PC-9 (cell line): ENCODE measurements at regions of chr19 and their contacts with region 1.

Region 1: GRCh38 chr19:32405431-32406161 is at the start of gene DPY19L3:
- DNase-seq: peak; percentile 79 to 94
- H3K4me3 ChIP-seq: peak within 1 kb of the TSS; percentile 93
- H3K27ac ChIP-seq: peak within 1 kb of the TSS; percentile 66
- H3K4me1 ChIP-seq: peaks cover 17% of the 10 kb centered on the region; the same call in 1 of the 2 replicates
- H3K27me3 ChIP-seq: no peaks in the 10 kb centered on the region
- CTCF ChIP-seq: no peak
- total RNA-seq, gene DPY19L3: 22.3 and 29.0 TPM in 2 replicates

Region 2: DNA sequence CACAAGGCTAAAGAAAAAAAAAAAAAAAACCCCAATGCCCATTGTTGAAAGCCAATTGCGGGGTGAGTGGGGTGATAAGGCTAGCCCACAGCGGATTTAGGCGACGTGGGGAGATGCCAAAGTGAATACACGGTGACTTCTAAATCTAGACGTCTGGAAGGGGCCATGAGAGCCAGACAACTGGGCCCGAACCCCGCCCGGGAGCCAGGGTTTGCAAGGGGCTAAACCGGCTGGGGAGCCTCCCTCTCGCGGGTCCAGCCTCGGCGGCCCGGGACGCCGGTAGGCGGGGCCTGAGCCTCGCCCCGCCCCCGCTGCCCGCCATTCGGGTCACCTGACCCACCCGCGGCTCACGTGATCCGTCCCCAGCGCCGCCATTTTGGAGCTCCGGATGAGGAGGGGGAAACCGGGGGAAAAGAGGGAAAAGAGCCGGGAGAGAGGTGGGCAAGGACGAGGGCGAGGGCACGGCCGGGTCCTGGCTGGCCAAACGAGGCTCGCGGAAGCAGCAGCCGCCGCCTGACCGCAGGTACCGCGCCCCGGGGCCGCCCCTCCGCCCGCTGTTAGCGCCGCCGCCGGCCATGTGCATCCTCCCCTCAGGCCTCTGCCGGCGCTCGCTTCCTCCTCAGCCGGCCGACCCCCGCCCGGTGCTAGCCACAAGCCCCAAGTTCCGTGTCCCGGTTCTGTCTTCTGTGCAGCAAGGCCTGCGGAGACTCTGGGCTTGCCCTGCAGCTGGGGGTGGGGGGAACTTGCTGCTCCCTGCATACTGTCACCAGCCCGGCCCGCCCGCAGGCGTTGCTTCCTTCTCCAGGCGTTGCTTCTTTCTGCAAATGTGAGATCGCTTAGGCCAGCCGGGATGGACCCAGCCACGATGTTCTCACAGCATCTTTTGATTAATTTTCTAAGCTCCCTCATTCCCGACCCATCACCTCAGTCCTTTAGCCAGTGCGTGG is 60.1 kb before region 1 on chr19 and contains the start of gene ZNF507:
- CTCF ChIA-PET with region 1: no interaction called
- POLR2A ChIA-PET with region 1: interaction called, 6 read pairs
- intact Hi-C with region 1: loop called (anchors 2 kb)
- DNase-seq: peak; percentile 49 to 81
- H3K4me3 ChIP-seq: peak within 1 kb of the TSS; percentile 98
- H3K27ac ChIP-seq: peak within 1 kb of the TSS; percentile 65
- H3K4me1 ChIP-seq: peaks cover 56% of the 10 kb centered on the region
- H3K27me3 ChIP-seq: no peaks in the 10 kb centered on the region
- CTCF ChIP-seq: no peak
- total RNA-seq, gene ZNF507: 20.8 and 26.5 TPM in 2 replicates

Region 3: DNA sequence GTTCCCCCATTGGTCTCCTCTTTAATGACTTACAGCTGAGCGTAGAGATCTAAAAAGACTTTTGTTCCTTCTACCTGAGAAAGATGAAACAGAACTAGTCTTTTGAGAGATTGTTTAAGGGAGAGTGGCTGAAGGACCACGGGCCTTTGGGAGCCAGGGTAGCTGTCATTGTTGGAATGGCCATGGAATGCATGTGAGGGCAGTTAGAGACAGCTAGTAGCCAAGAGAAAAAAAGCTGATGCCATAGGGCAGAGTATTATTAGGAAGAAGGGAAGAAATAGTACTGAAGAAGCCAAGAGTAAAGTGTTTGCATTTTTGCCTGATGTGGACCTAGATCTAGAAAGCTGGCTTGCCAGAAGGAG is 54.6 kb before region 1 on chr19:
- CTCF ChIA-PET with region 1: no interaction called
- POLR2A ChIA-PET with region 1: interaction called, 38 read pairs
- intact Hi-C with region 1: no loop called
- DNase-seq: no peak
- H3K4me3 ChIP-seq: peak overlapping the region; percentile 9; the same call in 1 of the 2 replicates
- H3K27ac ChIP-seq: no peak overlapping the region
- H3K4me1 ChIP-seq: peaks cover 60% of the 10 kb centered on the region
- H3K27me3 ChIP-seq: no peaks in the 10 kb centered on the region
- CTCF ChIP-seq: no peak